Activated CD4-positive, alpha-beta memory T cell treated with anti-CD3 and anti-CD28 coated beads, Interleukin-2, amount 10 ng/mL, durations not matched to agents 7 days and 5 days (primary cell): ENCODE measurements at regions of chr11 and their contacts with region 1.

Region 1: GRCh38 chr11:45834298-45834756 is 12.9 kb upstream of the CRY2 start:
- DNase-seq: peak; percentile 68
- H3K4me3 Mint-ChIP-seq: peak overlapping the region; percentile 77
- H3K27ac Mint-ChIP-seq: peak overlapping the region; percentile 91
- H3K4me1 Mint-ChIP-seq: peaks cover 39% of the 10 kb centered on the region
- H3K27me3 Mint-ChIP-seq: peaks cover 12% of the 10 kb centered on the region

Region 2: DNA sequence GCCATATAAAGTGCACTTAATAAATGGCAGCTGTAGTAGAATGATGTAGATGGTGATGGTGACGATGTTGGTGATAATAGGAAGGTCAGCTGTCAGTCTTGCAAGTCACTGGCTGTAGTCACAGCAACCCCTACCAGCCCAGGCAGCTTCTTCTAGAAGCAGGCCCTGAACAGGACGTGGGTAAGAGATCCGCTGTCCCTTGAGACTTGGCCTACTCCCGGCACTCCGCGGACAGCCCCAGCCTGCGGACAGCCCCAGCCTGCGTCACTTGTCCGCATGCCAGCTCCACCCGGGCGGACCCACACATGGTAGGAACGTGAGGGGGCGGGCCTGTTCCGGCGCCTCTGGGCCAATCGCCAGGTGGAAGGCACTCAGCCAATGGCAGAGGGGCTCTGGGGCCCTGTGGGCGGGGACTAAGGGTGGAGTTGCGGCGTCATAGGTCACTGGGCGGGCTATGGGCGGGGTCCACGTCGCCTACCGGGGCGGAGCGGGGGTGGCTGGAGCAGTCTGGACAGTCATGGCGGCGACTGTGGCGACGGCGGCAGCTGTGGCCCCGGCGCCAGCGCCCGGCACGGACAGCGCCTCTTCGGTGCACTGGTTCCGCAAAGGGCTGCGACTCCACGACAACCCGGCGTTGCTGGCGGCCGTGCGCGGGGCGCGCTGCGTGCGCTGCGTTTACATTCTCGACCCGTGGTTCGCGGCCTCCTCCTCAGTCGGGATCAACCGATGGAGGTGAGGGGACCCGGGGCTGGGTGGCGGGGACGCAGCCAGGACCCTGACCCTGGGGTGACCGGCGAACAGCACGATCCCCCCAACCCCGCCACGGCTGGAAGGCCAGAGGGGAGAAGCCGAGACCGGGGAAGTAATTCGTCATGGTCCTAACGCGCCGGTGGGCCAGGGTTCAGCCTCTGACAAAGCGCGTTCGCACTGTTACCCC is 12.9 kb after region 1 on chr11 and contains the start of gene CRY2:
- CTCF ChIA-PET with region 1: interaction called, 79 read pairs
- POLR2A ChIA-PET with region 1: interaction called, 41 read pairs
- DNase-seq: peak; percentile 98
- H3K4me3 Mint-ChIP-seq: peak within 1 kb of the TSS; percentile 79
- H3K27ac Mint-ChIP-seq: peak within 1 kb of the TSS; percentile 72
- H3K4me1 Mint-ChIP-seq: peaks cover 54% of the 10 kb centered on the region
- H3K27me3 Mint-ChIP-seq: peaks cover 11% of the 10 kb centered on the region
- total RNA-seq, gene CRY2: 18.4 to 22.7 TPM